ENCODE measurements at regions of chr1 and their contacts with region 1.

Region 1: DNA sequence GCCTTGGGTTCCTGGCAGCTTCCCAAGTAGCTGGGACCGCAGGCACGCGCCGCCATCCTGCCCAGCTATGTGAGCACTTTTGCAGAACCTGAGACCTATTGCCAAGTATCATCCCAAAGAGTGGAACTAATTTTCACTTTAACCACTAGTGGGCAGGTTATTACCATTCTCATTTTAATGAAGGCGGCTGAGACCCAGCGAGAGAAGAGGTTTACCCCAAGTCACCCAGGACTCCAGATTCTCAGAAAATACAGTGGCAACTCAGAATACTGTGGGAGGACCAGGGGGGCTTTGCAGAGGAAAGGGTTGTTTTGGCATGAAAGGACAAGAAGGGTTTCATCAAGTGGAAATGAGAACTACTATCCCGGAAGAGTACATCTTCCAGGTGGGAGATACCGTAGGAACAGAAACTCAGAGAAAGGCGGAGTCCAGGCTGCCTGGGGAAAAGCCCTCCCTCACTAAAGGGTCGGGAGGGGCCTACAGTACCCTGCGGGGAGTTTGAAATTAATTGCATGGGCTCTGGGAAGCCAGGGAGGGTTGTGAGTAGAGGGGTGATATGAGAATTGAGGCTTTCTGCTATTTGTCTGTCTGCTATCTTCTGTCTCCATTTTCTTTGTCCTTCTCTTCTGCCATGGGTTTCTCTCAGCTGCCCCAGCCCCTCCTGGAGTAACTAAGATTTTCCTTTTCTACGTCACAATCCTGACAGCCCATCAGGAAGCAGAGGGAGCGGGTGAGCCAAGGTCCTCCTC is 7.2 kb upstream of the SEMA4A start:
- DNase-seq: peak in 4 of 5 donors; percentile 61 to 74 (median 70)
- H3K4me3 ChIP-seq: no peak overlapping the region
- H3K27ac ChIP-seq: no peak overlapping the region
- H3K4me1 ChIP-seq: peaks cover 8% of the 10 kb centered on the region
- H3K27me3 ChIP-seq: no peaks in the 10 kb centered on the region
- CTCF ChIP-seq: peak; percentile 38 to 74 (median 70)
- EP300 ChIP-seq: no peak
- POLR2A ChIP-seq: no peak

Region 2: DNA sequence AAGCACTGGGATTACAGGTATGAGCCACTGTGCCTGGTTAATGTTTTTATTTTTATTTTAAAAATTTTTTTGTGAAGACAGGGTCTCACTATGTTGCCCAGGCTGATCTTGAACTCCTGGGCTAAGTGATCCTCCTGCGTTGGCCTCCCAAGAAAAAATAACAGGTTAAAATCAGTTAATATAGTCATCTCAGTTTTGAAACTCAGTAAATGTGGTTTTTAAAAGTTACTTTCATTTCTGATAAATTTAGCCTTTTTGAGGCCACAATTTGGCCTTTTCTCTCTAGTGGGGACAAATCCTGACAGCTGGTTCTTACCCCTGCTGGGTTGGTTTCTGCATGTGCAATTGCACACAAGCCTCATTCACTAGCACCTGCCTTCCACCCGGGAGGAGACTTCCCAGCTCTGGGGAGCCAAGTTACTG is 79.9 kb after region 1 on chr1:
- intact Hi-C with region 1: loop called (anchors 2 to 5 kb)
- DNase-seq: no peak
- H3K4me3 ChIP-seq: no peak overlapping the region
- H3K27ac ChIP-seq: no peak overlapping the region
- H3K4me1 ChIP-seq: no peaks in the 10 kb centered on the region
- H3K27me3 ChIP-seq: no peaks in the 10 kb centered on the region
- CTCF ChIP-seq: no peak
- EP300 ChIP-seq: no peak
- POLR2A ChIP-seq: no peak

Region 3: GRCh38 chr1:156319664-156320063 is 173.5 kb after region 1 on chr1:
- intact Hi-C with region 1: loop called in 1 of 4 experiments (anchors 5 kb)
- DNase-seq: no peak
- H3K4me3 ChIP-seq: no peak overlapping the region
- H3K27ac ChIP-seq: no peak overlapping the region
- H3K4me1 ChIP-seq: no peaks in the 10 kb centered on the region
- H3K27me3 ChIP-seq: no peaks in the 10 kb centered on the region
- CTCF ChIP-seq: peak in 1 of 3 donors; percentile 13
- EP300 ChIP-seq: no peak
- POLR2A ChIP-seq: no peak

Measured in ovary (tissue), 10 donors.